Activated CD8-positive, alpha-beta T cell treated with anti-CD3 and anti-CD28 coated beads, Interleukin-2, amount 10 ng/mL, durations not matched to agents 7 days and 5 days (primary cell): ENCODE measurements at regions of chr2 and their contacts with region 1.

Region 1: GRCh38 chr2:33583194-33583938 is 15.7 kb downstream of the FAM98A start:
- DNase-seq: peak; percentile 36
- ATAC-seq: no peak
- H3K4me3 Mint-ChIP-seq: no peak overlapping the region
- H3K27ac Mint-ChIP-seq: no peak overlapping the region
- H3K4me1 Mint-ChIP-seq: peaks cover 13% of the 10 kb centered on the region
- H3K27me3 Mint-ChIP-seq: no peaks in the 10 kb centered on the region

Region 2: DNA sequence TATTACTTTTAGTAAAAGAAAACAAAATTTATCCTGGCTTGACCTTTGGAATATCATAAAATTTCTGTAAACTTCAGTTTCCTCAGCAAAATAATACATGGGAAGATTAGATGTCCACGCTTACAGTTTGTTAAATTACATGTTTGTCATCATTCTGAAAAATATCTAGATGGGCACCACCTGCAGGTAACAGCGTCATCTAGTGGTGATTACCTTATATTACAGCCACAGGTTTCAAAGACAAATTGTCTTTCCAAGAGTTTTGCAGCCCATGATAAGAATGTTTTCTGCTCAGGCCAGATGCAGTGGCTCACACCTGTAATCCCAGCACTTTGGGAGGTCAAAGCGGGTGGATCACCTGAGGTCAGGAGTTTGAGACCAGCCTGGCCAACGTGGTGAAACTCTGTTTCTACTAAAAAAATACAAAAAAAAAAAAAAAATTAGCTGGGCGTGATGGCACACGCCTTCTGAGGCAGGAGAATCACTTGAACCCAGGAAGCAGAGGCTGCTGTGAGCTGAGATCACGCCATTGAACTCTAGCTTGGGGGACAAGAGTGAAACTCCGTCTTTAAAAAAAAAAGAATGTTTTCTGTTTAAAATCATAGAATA is 203.3 kb before region 1 on chr2:
- CTCF ChIA-PET with region 1: interaction called, 23 read pairs
- POLR2A ChIA-PET with region 1: no interaction called
- DNase-seq: no peak
- ATAC-seq: no peak
- H3K4me3 Mint-ChIP-seq: no peak overlapping the region
- H3K27ac Mint-ChIP-seq: no peak overlapping the region
- H3K4me1 Mint-ChIP-seq: no peaks in the 10 kb centered on the region
- H3K27me3 Mint-ChIP-seq: peaks cover 2% of the 10 kb centered on the region

Region 3: DNA sequence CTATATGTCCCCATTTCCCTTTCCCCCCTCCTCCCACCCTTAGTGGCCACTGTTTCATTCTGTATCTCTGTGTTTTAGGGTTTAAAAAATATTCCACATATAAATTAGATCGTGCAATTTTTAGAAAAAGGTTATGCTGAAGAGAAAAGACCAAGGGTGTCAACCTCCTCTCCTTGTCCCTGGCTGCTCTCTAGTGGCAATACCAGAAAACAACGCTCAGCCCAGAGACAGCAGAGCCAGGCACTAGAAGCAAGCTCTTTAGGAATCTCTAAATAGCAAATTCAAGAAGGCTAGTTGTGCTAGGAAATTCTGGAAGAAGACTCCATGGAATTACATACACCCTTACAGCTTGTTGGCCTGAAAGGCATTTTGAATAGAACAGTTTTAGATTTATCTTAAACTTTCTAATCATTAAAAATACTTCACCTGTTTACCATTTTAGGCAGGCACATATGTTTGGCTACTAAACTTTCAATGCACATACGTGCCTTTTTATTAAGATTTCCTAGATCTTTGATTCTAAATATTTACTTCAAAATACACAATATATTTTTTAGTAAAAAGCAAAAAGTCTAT is 142.0 kb before region 1 on chr2:
- CTCF ChIA-PET with region 1: interaction called, 14 read pairs
- POLR2A ChIA-PET with region 1: no interaction called
- DNase-seq: peak; percentile 29
- ATAC-seq: no peak
- H3K4me3 Mint-ChIP-seq: no peak overlapping the region
- H3K27ac Mint-ChIP-seq: no peak overlapping the region
- H3K4me1 Mint-ChIP-seq: no peaks in the 10 kb centered on the region
- H3K27me3 Mint-ChIP-seq: peaks cover 13% of the 10 kb centered on the region

Region 4: DNA sequence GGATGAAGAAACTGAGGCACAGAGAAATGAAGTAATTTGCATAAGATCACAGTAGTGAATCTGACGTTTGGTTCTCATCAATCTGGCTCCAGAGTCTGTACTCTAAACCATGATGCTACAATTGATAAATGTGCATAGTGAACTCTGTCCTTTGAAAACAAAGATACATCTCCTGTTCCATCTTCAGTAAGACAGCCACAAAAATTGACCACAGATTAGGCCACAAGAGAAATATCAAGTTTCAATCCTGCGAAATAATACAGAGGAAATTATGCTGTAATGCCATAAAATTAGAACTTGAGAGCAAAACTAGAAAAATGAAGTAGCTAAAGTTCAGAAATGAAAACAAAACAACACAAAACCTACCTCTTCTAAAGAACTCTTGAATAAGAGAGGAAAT is 12.7 kb before region 1 on chr2:
- CTCF ChIA-PET with region 1: interaction called, 12 read pairs
- POLR2A ChIA-PET with region 1: no interaction called
- DNase-seq: no peak
- ATAC-seq: no peak
- H3K4me3 Mint-ChIP-seq: no peak overlapping the region
- H3K27ac Mint-ChIP-seq: no peak overlapping the region
- H3K4me1 Mint-ChIP-seq: peaks cover 7% of the 10 kb centered on the region
- H3K27me3 Mint-ChIP-seq: no peaks in the 10 kb centered on the region